HEK293 (cell line): ENCODE measurements at regions of chr1 and their contacts with region 1.

Region 1: GRCh38 chr1:93980320-93981273 is 71.4 kb upstream of the GCLM start:
- H3K4me3 ChIP-seq: no peak overlapping the region
- H3K27ac ChIP-seq: no peak overlapping the region
- H3K4me1 ChIP-seq: no peaks in the 10 kb centered on the region
- CTCF ChIP-seq: no peak

Region 2: DNA sequence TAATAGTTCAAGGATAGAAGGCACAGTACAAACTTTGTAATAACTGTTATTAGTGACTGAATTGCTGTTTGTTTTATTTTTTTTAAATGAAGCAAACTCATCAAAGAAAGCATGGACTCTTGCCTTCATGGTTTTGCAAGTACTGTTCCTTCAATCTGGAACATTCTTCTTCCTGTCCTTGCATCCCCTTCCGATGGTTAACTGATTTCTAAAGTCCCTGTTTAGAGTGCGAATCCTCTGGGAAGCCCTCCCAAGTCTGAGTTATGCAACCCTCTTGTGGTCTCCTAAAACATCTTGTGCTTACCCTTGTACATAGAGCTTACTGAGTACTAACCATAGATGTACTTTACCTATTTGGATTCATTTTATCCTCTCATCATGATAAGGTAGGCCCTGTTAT is 19.2 kb before region 1 on chr1:
- CTCF ChIA-PET with region 1: interaction called, 10 read pairs
- POLR2A ChIA-PET with region 1: no interaction called
- H3K4me3 ChIP-seq: no peak overlapping the region
- H3K27ac ChIP-seq: peak overlapping the region; percentile 13; the same call in 1 of the 2 replicates
- H3K4me1 ChIP-seq: peaks cover 5% of the 10 kb centered on the region
- CTCF ChIP-seq: no peak

Region 3: GRCh38 chr1:94081566-94082344 is 101.2 kb after region 1 on chr1:
- CTCF ChIA-PET with region 1: no interaction called
- POLR2A ChIA-PET with region 1: no interaction called
- H3K4me3 ChIP-seq: no peak overlapping the region
- H3K27ac ChIP-seq: no peak overlapping the region
- H3K4me1 ChIP-seq: no peaks in the 10 kb centered on the region
- CTCF ChIP-seq: no peak